HepG2 (cell line): ENCODE measurements at regions of chr22 and their contacts with region 1.

Region 1: DNA sequence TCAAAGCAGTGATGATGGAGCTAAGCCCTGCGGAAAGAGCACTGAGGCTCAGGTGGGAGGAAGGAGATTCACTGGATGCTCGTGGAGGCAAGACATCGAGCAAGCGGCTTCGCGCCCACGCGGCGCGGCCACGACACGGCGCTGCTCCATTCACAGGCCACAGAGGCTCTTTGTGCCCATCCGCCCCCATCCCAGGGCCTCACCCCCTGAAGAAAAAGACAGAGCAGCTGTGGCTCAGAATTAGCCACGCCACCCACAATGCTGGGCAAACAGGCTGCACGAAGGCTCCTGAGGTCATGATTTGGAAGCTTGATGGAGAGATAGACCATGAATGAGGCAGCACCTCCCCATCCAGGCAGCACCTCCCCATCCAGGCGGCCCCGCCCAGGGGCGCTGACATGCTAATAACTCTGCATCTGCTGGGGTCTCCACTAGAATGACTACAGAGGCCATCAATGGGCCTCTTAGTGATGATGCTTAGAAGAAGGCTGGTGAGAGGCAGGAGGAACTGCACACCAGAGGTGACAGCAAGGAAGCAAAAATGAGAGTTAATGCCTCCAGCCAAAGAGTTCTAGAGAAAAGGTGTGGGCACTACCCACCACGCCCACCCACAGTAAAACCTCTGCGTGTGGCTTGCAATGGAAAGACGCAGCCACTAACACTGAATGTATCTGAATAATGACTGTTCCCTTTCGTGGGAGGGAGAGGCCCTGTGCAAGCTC is 43.5 kb downstream of the MYH9 start:
- DNase-seq: no peak
- ATAC-seq: no peak; the same call in 2 of the 3 replicates
- H3K4me3 ChIP-seq: no peak overlapping the region
- H3K27ac ChIP-seq: peak overlapping the region; percentile 85
- H3K4me1 ChIP-seq: peaks cover 85% of the 10 kb centered on the region
- H3K27me3 ChIP-seq: no peaks in the 10 kb centered on the region
- CTCF ChIP-seq: no peak
- EP300 ChIP-seq: no peak
- POLR2A ChIP-seq: no peak
- RAD21 ChIP-seq: no peak

Region 2: DNA sequence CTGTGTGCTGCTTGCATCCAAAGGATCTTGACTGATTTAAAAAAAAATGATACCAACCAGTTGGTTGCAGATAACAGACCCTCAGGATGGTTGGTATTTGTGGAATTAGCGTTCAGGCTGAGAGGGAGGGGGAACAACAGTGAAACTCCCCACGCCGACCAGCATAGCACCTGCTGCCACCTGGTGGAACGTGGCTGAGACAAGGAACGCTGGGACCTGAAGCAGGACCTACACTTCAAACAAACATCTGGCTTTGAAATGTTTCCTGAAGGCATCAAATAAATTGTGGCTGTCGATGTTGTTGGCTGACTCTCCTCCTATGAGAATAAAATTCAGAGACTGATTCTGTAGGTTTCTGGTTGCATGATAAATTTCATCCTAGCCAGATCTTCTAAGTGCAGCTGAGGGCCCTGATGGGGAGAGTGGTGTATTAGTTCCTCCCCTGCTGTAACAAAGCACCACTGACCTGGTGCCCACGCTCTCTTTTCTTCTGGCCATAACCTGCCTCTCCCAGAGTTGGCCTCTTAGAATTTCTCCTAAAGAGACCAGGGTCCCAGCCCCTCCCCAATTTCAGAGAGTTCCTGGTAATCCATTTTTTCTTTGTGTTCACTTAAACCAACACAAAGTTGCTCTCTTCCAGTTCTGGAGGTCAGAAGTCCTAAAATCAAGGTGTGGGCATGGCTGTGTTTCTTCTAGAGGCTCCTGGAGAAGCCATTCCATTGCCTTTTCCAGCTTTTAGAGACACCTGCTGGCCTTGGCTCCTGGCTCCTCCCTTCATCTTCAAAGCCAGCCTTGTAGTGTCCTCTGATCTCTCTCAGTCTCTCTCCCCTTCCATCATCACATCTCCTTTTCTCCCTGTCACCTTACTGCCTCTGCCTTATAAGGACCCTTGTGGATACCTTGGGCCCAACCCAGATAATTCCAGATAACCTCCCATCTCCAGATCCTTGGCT is 122.2 kb before region 1 on chr22:
- CTCF ChIA-PET with region 1: no interaction called
- POLR2A ChIA-PET with region 1: no interaction called
- in situ Hi-C with region 1: no loop called
- intact Hi-C with region 1: no loop called
- DNase-seq: peak; percentile 37
- ATAC-seq: peak; percentile 86
- H3K4me3 ChIP-seq: no peak overlapping the region
- H3K27ac ChIP-seq: no peak overlapping the region
- H3K4me1 ChIP-seq: peaks cover 22% of the 10 kb centered on the region
- H3K27me3 ChIP-seq: no peaks in the 10 kb centered on the region
- CTCF ChIP-seq: peak; percentile 89
- EP300 ChIP-seq: no peak
- POLR2A ChIP-seq: no peak
- RAD21 ChIP-seq: peak; percentile 46

Region 3: DNA sequence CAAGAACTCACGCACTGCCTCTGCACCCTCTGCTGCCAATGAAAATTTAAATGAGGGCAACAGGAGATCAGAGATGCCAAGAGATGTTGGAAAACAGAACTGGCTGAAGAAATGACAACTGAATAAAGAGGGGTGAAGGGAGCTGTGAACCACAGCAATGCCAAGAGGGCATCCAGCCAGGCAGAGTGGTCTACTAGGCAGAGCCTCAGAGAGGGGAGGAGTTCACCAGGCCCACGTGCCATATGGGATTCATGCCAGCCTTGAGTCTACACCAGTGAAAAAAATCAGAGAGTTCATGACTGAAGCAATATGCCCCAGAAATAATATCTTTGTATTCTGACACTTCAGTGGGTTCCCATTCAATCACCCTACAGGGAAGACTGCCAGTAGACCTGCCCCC is 109.3 kb before region 1 on chr22:
- CTCF ChIA-PET with region 1: no interaction called
- POLR2A ChIA-PET with region 1: no interaction called
- in situ Hi-C with region 1: no loop called
- intact Hi-C with region 1: no loop called
- DNase-seq: no peak
- ATAC-seq: no peak
- H3K4me3 ChIP-seq: no peak overlapping the region; a peak in 1 of 6 replicates
- H3K27ac ChIP-seq: no peak overlapping the region
- H3K4me1 ChIP-seq: peaks cover 84% of the 10 kb centered on the region
- H3K27me3 ChIP-seq: no peaks in the 10 kb centered on the region; a peak in 1 of 5 replicates
- CTCF ChIP-seq: no peak
- EP300 ChIP-seq: no peak
- POLR2A ChIP-seq: no peak
- RAD21 ChIP-seq: no peak

Region 4: GRCh38 chr22:36331306-36331911 is 12.9 kb before region 1 on chr22:
- CTCF ChIA-PET with region 1: no interaction called
- POLR2A ChIA-PET with region 1: interaction called, 14 read pairs
- in situ Hi-C with region 1: no loop called
- intact Hi-C with region 1: no loop called
- DNase-seq: peak; percentile 75
- ATAC-seq: peak; percentile 53; the same call in 2 of the 3 replicates
- H3K4me3 ChIP-seq: no peak overlapping the region
- H3K27ac ChIP-seq: peak overlapping the region; percentile 33
- H3K4me1 ChIP-seq: peaks cover 48% of the 10 kb centered on the region
- H3K27me3 ChIP-seq: no peaks in the 10 kb centered on the region
- CTCF ChIP-seq: no peak
- EP300 ChIP-seq: peak in 1 of 2 experiments; percentile 26; a peak in 1 of 4 replicates
- POLR2A ChIP-seq: no peak
- RAD21 ChIP-seq: no peak

Region 5: GRCh38 chr22:36365020-36365411 is 20.7 kb after region 1 on chr22:
- CTCF ChIA-PET with region 1: no interaction called
- POLR2A ChIA-PET with region 1: interaction called, 12 read pairs
- in situ Hi-C with region 1: no loop called
- intact Hi-C with region 1: no loop called
- DNase-seq: no peak
- ATAC-seq: no peak
- H3K4me3 ChIP-seq: no peak overlapping the region
- H3K27ac ChIP-seq: peak overlapping the region; percentile 76
- H3K4me1 ChIP-seq: peaks cover 100% of the 10 kb centered on the region
- H3K27me3 ChIP-seq: no peaks in the 10 kb centered on the region
- CTCF ChIP-seq: no peak
- EP300 ChIP-seq: peak in 1 of 2 experiments; percentile 22; a peak in 1 of 4 replicates
- POLR2A ChIP-seq: no peak
- RAD21 ChIP-seq: no peak